ENCODE measurements at regions of chr14 and their contacts with region 1.

Region 1: GRCh38 chr14:90850487-90850886 is 34.3 kb upstream of the TTC7B start:
- DNase-seq: no peak
- H3K4me3 ChIP-seq: no peak overlapping the region
- H3K27ac ChIP-seq: no peak overlapping the region
- H3K4me1 ChIP-seq: no peaks in the 10 kb centered on the region
- H3K27me3 ChIP-seq: no peaks in the 10 kb centered on the region
- CTCF ChIP-seq: no peak
- EP300 ChIP-seq: no peak
- POLR2A ChIP-seq: no peak

Region 2: GRCh38 chr14:90587918-90588317 is 262.6 kb before region 1 on chr14:
- intact Hi-C with region 1: no loop called
- DNase-seq: no peak
- H3K4me3 ChIP-seq: no peak overlapping the region
- H3K27ac ChIP-seq: no peak overlapping the region
- H3K4me1 ChIP-seq: no peaks in the 10 kb centered on the region
- H3K27me3 ChIP-seq: no peaks in the 10 kb centered on the region
- CTCF ChIP-seq: no peak
- EP300 ChIP-seq: no peak
- POLR2A ChIP-seq: no peak

Region 3: DNA sequence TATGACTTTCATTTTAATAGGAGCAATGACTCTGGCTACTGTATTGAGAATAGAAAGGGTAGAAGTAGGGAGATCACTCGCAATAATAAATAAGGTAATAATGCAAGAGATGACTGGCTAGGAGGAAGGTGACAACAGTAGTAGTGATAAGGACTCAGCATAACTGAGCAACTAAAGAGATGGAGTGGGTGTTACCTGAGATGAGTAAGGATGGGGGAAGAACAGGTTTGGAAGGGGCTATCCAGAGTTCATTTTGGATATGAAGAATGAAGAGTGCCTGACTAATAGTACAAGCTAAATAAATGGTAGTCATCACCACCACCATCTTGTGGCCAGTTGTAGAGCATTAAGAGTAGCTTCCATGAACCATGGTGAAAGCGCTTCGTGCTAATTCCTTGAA is 108.9 kb after region 1 on chr14:
- intact Hi-C with region 1: loop called in 1 of 4 experiments (anchors 10 kb)
- DNase-seq: no peak
- H3K4me3 ChIP-seq: no peak overlapping the region
- H3K27ac ChIP-seq: no peak overlapping the region
- H3K4me1 ChIP-seq: no peaks in the 10 kb centered on the region
- H3K27me3 ChIP-seq: no peaks in the 10 kb centered on the region
- CTCF ChIP-seq: no peak
- EP300 ChIP-seq: no peak
- POLR2A ChIP-seq: no peak

Region 4: DNA sequence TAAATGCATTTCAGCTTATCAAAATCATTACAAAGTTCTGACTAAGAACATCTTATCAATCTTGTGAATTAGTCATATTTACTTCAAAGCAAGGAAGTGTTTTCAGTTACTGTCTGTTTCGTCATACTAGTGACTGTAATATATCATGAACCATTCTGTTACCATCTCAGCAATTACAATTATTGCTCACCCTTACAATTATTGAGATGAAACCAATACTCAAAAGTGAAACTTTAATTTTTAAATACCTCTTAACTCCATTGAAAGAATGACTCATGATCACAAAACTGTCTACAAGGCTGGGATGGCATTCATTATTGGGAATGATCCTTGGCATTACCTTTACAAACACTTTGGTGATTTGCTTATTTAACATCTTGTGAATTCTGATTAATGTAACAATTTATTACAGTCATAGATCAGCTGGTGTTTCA is 119.7 kb after region 1 on chr14:
- intact Hi-C with region 1: no loop called
- DNase-seq: no peak
- H3K4me3 ChIP-seq: no peak overlapping the region
- H3K27ac ChIP-seq: no peak overlapping the region
- H3K4me1 ChIP-seq: no peaks in the 10 kb centered on the region
- H3K27me3 ChIP-seq: no peaks in the 10 kb centered on the region
- CTCF ChIP-seq: no peak
- EP300 ChIP-seq: no peak
- POLR2A ChIP-seq: no peak

Region 5: DNA sequence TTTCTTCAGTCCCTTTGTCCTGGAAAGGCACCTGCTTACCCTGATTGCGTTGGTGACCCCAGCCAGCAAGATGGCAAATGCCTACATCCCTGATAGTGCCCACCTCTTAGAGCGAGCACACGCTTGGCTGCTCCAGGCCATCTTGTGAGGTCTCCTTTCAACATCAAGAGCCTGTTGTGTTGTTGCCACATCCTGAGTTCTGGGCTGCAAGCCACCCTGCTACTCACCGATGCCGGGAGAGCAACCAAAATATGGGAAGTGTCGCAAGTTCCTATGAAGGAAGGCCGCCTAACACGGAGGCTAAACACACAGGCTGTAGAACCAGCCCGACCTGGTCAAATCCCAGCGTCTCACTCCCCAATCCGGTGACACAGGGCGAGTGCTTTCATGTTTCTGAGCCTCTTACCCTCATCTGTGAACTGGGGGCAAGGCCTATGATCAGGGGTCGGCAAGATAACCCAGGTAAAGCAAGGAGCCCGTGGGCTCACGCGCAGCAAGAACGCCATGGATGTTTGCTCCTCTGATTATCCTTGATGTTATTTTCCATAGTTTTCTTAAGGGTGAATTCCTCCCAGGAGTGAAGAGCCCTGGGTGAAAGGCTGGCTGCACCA is 1799.6 kb after region 1 on chr14:
- intact Hi-C with region 1: loop called in 1 of 4 experiments (anchors 10 kb)
- DNase-seq: peak in 4 of 5 donors; percentile 36 to 73 (median 53)
- H3K4me3 ChIP-seq: no peak overlapping the region
- H3K27ac ChIP-seq: no peak overlapping the region
- H3K4me1 ChIP-seq: no peaks in the 10 kb centered on the region
- H3K27me3 ChIP-seq: no peaks in the 10 kb centered on the region
- CTCF ChIP-seq: no peak
- EP300 ChIP-seq: peak; percentile 55
- POLR2A ChIP-seq: no peak